HCT116 (cell line): ENCODE measurements at regions of chr3 and their contacts with region 1.

Region 1: GRCh38 chr3:44761424-44762169 is at the starts of genes KIAA1143 and KIF15:
- DNase-seq: peak; percentile 92
- ATAC-seq: peak; percentile 89
- H3K4me3 ChIP-seq: peak within 1 kb of the TSS; percentile 81 to 93
- H3K27ac ChIP-seq: peak within 1 kb of the TSS; percentile 77
- H3K4me1 ChIP-seq: peaks cover 7 to 10% of the 10 kb centered on the region in 2 experiments; a peak in 2 of 4 replicates
- H3K27me3 ChIP-seq: no peaks in the 10 kb centered on the region
- CTCF ChIP-seq: no peak
- POLR2A ChIP-seq: peak; percentile 13
- RAD21 ChIP-seq: no peak
- total RNA-seq, gene KIAA1143: 32.2 TPM
- total RNA-seq, gene KIF15: 20.9 TPM

Region 2: DNA sequence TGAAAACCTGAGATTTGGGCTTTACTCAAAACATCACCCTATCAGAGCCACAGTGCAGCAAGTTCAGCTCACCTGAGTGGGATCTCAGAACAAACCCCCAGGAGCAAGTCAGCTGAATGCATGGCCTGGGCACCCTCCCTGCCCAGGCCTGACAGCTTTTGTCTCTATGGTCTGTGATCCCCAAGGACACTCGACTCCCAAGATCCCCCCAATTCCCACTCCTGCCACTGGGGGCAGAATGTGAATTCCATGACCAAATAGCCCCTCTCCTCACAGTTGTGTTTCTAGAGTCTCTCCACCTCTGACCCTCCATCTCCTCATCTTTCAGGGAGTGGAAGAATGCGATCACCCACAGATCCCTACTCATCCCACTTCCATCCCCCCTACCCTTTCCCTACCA is 343.0 kb before region 1 on chr3:
- CTCF ChIA-PET with region 1: no interaction called
- POLR2A ChIA-PET with region 1: no interaction called
- RAD21 ChIA-PET with region 1: no interaction called
- intact Hi-C with region 1: no loop called
- DNase-seq: peak; percentile 4
- ATAC-seq: peak; percentile 70
- H3K4me3 ChIP-seq: no peak overlapping the region
- H3K27ac ChIP-seq: no peak overlapping the region
- H3K4me1 ChIP-seq: no peaks in the 10 kb centered on the region
- H3K27me3 ChIP-seq: no peaks in the 10 kb centered on the region
- CTCF ChIP-seq: peak in 2 of 3 experiments; percentile 54 to 59; a peak in 4 of 6 replicates
- POLR2A ChIP-seq: no peak
- RAD21 ChIP-seq: no peak

Region 3: DNA sequence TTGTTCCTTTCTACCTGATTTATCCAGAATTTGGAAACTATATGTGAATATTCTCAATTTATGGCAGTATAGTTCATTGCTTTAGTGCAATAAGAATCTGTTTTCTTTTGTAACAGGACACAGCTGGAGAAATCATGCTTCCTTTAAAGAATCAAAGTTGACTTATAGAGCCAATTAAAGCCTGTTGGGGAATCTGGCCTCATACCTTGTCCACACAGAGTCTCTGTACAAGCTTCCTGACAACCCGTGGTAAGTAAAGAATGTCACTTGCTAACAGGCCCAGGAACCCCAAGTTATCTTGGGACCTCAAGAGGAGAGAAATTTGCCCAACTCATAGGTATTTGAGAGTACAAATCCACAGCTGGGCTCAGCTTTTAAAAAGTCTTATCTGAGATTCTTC is 294.4 kb before region 1 on chr3:
- CTCF ChIA-PET with region 1: no interaction called
- POLR2A ChIA-PET with region 1: no interaction called
- RAD21 ChIA-PET with region 1: no interaction called
- intact Hi-C with region 1: no loop called
- DNase-seq: no peak
- ATAC-seq: no peak
- H3K4me3 ChIP-seq: no peak overlapping the region
- H3K27ac ChIP-seq: no peak overlapping the region
- H3K4me1 ChIP-seq: peaks cover 8 to 22% of the 10 kb centered on the region in 2 experiments
- H3K27me3 ChIP-seq: no peaks in the 10 kb centered on the region
- CTCF ChIP-seq: no peak
- POLR2A ChIP-seq: no peak
- RAD21 ChIP-seq: no peak

Region 4: GRCh38 chr3:44499149-44499898 is 262.3 kb before region 1 on chr3:
- CTCF ChIA-PET with region 1: no interaction called
- POLR2A ChIA-PET with region 1: no interaction called
- RAD21 ChIA-PET with region 1: no interaction called
- intact Hi-C with region 1: loop called (anchors 10 kb)
- DNase-seq: no peak
- ATAC-seq: no peak
- H3K4me3 ChIP-seq: no peak overlapping the region
- H3K27ac ChIP-seq: no peak overlapping the region
- H3K4me1 ChIP-seq: no peaks in the 10 kb centered on the region
- H3K27me3 ChIP-seq: no peaks in the 10 kb centered on the region
- CTCF ChIP-seq: no peak
- POLR2A ChIP-seq: no peak
- RAD21 ChIP-seq: no peak

Region 5: GRCh38 chr3:44966750-44967278 is 205.2 kb after region 1 on chr3:
- CTCF ChIA-PET with region 1: no interaction called
- POLR2A ChIA-PET with region 1: no interaction called
- RAD21 ChIA-PET with region 1: no interaction called
- intact Hi-C with region 1: loop called (anchors 10 kb)
- DNase-seq: peak; percentile 79
- ATAC-seq: peak; percentile 94
- H3K4me3 ChIP-seq: peak overlapping the region; percentile 8 to 32; a peak in 3 of 4 replicates
- H3K27ac ChIP-seq: peak overlapping the region; percentile 81
- H3K4me1 ChIP-seq: peaks cover 42 to 74% of the 10 kb centered on the region in 2 experiments
- H3K27me3 ChIP-seq: no peaks in the 10 kb centered on the region
- CTCF ChIP-seq: no peak
- POLR2A ChIP-seq: no peak
- RAD21 ChIP-seq: peak; percentile 30; the same call in 1 of the 2 replicates